ENCODE measurements at regions of chr20 and their contacts with region 1.

Region 1: GRCh38 chr20:324177-325044 is 941 bp upstream of the SOX12 start:
- DNase-seq: peak; percentile 83 to 87 (median 84)
- H3K4me3 ChIP-seq: peak overlapping the region; percentile 79 to 96
- H3K4me3 Mint-ChIP-seq: peak overlapping the region; percentile 90 to 95 (median 92)
- H3K27ac ChIP-seq: peak overlapping the region; percentile 45
- H3K27ac Mint-ChIP-seq: peak overlapping the region; percentile 88 to 96 (median 92)
- H3K4me1 ChIP-seq: peaks cover 25% of the 10 kb centered on the region
- H3K4me1 Mint-ChIP-seq: peaks cover 3 to 22% (median 14%) of the 10 kb centered on the region in 4 donors
- H3K27me3 ChIP-seq: no peaks in the 10 kb centered on the region
- H3K27me3 Mint-ChIP-seq: no peaks in the 10 kb centered on the region

Region 2: DNA sequence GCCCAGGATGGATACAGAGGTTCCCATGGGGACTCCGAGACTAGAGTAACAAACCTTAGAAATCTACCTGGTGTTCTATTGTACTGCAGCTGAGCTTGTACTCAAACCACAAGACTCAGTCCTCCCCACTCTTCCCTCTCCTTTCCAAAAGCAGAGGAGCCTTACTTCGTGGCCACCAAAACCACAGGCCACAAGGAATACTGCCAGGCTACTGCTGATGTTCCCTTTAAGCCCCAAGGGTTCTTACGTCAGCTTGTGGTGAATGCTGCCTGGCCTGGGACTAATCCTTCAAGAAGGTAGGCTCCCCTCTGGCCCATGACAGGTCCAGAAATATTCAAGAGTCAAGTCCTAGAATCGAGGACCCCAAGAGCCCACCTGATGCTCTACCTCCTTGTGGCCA is 124.4 kb before region 1 on chr20:
- CTCF ChIA-PET with region 1: no interaction called
- POLR2A ChIA-PET with region 1: no interaction called
- intact Hi-C with region 1: no loop called
- DNase-seq: no peak
- H3K4me3 ChIP-seq: no peak overlapping the region
- H3K4me3 Mint-ChIP-seq: no peak overlapping the region
- H3K27ac ChIP-seq: no peak overlapping the region
- H3K27ac Mint-ChIP-seq: no peak overlapping the region
- H3K4me1 ChIP-seq: no peaks in the 10 kb centered on the region
- H3K4me1 Mint-ChIP-seq: no peaks in the 10 kb centered on the region
- H3K27me3 ChIP-seq: no peaks in the 10 kb centered on the region
- H3K27me3 Mint-ChIP-seq: peaks cover 14 to 20% of the 10 kb centered on the region in 2 donors

Region 3: GRCh38 chr20:290084-290831 is 34.2 kb before region 1 on chr20 and contains the start of gene C20orf96:
- CTCF ChIA-PET with region 1: interaction called, 11 read pairs
- POLR2A ChIA-PET with region 1: interaction called, 112 read pairs
- intact Hi-C with region 1: loop called (anchors 1 kb)
- DNase-seq: peak; percentile 77 to 85 (median 81)
- H3K4me3 ChIP-seq: peak within 1 kb of the TSS; percentile 66 to 68
- H3K4me3 Mint-ChIP-seq: peak within 1 kb of the TSS in 1 of 8 donors; percentile 34
- H3K27ac ChIP-seq: peak within 1 kb of the TSS; percentile 29
- H3K27ac Mint-ChIP-seq: peak within 1 kb of the TSS in 1 of 7 donors; percentile 73
- H3K4me1 ChIP-seq: peaks cover 19% of the 10 kb centered on the region
- H3K4me1 Mint-ChIP-seq: peaks cover 3 to 7% (median 5%) of the 10 kb centered on the region in 4 donors
- H3K27me3 ChIP-seq: no peaks in the 10 kb centered on the region
- H3K27me3 Mint-ChIP-seq: no peaks in the 10 kb centered on the region
- total RNA-seq, gene C20orf96: 1.8 to 2.5 TPM

Region 4: DNA sequence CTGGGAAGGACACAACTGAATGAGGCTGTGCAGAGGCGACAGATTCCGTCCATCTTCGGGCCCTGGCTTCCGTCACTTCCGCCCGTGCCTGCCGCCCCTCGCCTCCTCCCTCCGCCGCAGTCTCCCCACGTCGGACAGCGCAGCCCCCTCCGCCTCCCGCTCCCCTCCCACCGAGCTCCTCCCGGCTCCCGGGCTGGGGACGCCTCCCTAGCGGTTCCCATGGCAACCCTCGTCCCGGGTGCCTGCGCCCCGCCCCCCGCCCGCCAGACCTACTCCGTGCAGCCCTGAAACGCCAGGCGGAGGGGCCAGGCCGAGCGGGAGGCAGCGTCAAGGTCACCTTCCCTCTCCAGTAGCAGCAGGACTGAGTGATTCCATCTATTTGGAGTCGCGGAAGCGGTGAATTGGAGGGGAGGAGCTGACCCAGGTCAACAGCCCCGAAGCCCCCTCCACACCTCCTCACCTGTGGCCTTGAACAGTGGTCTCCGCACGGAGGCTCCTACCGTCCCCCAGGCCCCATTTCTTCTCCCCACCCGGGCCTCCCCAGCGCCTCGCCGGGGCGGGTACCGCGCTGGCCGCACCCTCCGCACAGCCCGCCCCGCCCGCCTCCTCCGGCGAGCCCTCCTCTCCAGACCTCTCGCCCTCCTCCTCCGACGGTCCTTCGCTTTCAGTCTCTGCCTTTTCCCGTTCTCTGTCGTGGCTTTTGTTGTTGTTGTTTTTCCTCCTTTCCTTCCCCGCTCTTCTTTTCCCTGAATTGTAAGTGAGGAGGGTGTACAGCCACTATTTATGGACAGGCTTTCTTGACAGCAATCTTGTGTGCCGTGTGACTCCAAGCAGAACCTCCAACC is 23.5 kb after region 1 on chr20:
- CTCF ChIA-PET with region 1: interaction called, 4 read pairs
- POLR2A ChIA-PET with region 1: interaction called, 3 read pairs
- intact Hi-C with region 1: loop called (anchors 2 kb)
- DNase-seq: peak; percentile 32 to 62 (median 36)
- H3K4me3 ChIP-seq: peak overlapping the region; percentile 57 to 81
- H3K4me3 Mint-ChIP-seq: peak overlapping the region; percentile 80 to 92 (median 89)
- H3K27ac ChIP-seq: peak overlapping the region; percentile 18
- H3K27ac Mint-ChIP-seq: peak overlapping the region in 6 of 7 donors; percentile 6 to 89 (median 60)
- H3K4me1 ChIP-seq: peaks cover 16% of the 10 kb centered on the region
- H3K4me1 Mint-ChIP-seq: peaks cover 10 to 16% (median 13%) of the 10 kb centered on the region in 4 donors
- H3K27me3 ChIP-seq: no peaks in the 10 kb centered on the region
- H3K27me3 Mint-ChIP-seq: no peaks in the 10 kb centered on the region

Region 5: GRCh38 chr20:419556-420168 is 95.3 kb after region 1 on chr20:
- CTCF ChIA-PET with region 1: no interaction called
- POLR2A ChIA-PET with region 1: no interaction called
- intact Hi-C with region 1: no loop called
- DNase-seq: no peak
- H3K4me3 ChIP-seq: no peak overlapping the region
- H3K4me3 Mint-ChIP-seq: no peak overlapping the region
- H3K27ac ChIP-seq: no peak overlapping the region
- H3K27ac Mint-ChIP-seq: peak overlapping the region in 1 of 7 donors; percentile 69
- H3K4me1 ChIP-seq: peaks cover 7% of the 10 kb centered on the region
- H3K4me1 Mint-ChIP-seq: peaks cover 11 to 21% (median 17%) of the 10 kb centered on the region in 4 donors
- H3K27me3 ChIP-seq: no peaks in the 10 kb centered on the region
- H3K27me3 Mint-ChIP-seq: no peaks in the 10 kb centered on the region